ENCODE measurements at regions of chr16 and their contacts with region 1.

Region 1: GRCh38 chr16:84617791-84618580 is at the start of gene COTL1:
- DNase-seq: peak; percentile 99
- ATAC-seq: peak; percentile 92 to 95
- total RNA-seq, gene COTL1: 37.3 to 43.9 TPM

Region 2: GRCh38 chr16:84511180-84511824 is 106.7 kb before region 1 on chr16:
- intact Hi-C with region 1: loop called (anchors 1 to 2 kb)
- DNase-seq: peak; percentile 86
- ATAC-seq: peak; percentile 77 to 80

Region 3: GRCh38 chr16:84759061-84759460 is 141.1 kb after region 1 on chr16:
- intact Hi-C with region 1: no loop called
- DNase-seq: no peak
- ATAC-seq: no peak